K562 (cell line): ENCODE measurements at regions of chr4 and their contacts with region 1.

Region 1: DNA sequence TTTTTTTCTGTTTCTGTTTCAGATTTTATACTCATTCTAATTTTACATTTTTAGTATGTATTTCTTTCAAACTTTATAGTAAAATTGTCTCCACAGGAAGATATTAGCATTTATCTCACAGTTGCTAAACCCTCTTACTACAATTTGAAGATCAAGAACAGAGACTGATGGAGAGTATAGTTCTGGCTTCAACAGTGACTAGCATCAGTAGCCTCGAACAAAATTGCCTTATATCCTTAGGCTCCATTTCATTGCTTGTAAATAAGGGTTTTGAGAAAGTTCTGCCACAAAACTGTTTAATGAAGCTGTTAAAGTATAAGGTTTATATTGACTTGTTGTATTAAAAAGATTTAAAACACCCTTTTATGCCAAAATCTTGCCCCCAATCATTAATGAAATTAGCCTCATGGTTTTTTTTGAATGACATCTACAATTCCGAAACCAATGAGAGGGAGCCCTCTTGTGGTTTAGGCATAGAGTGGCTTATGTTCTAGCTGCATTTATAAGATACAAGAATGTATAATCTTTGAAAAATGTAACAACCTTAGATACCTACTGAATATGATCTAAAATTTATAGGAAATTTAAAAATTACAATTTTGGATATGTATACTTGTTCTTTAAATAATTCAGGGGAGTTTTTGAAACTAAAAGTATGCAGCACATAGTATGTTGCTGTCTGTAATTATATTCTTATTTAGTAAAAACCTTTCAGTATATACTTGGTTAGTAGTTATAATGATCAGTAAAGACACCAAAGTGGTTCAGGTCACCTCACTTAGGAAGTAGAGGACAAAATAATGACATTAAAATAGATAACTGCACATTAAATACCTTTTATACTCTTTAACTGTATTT is 109.8 kb upstream of the HPGD start:
- DNase-seq: peak; percentile 24 to 71 (median 32)
- ATAC-seq: peak; percentile 90
- H3K4me3 ChIP-seq: no peak overlapping the region
- H3K27ac ChIP-seq: no peak overlapping the region
- H3K4me1 ChIP-seq: no peaks in the 10 kb centered on the region
- H3K27me3 ChIP-seq: no peaks in the 10 kb centered on the region
- CTCF ChIP-seq: peak; percentile 48 to 83 (median 58); a peak in 5 of 6 replicates
- EP300 ChIP-seq: no peak
- POLR2A ChIP-seq: no peak
- RAD21 ChIP-seq: peak; percentile 86 to 92

Region 2: DNA sequence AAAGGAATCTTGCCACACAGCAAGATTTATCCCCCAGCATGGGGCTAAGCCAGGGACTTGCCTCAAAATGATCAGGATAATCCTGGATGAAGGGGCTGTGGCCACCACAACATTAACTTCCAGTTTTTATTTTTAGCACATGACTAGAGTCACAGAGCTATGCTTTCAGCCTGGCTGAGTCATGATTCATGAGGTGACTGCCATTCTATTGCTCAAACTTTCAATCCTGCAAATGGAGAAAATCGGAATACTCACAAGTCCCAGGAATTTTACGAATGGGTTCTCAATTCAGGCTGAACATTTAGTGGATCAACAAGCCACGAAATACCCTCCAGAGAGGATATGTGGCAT is 39.2 kb before region 1 on chr4:
- CTCF ChIA-PET with region 1: no interaction called
- POLR2A ChIA-PET with region 1: no interaction called
- in situ Hi-C with region 1: no loop called
- intact Hi-C with region 1: no loop called
- DNase-seq: peak in 2 of 4 experiments; percentile 34 to 53
- ATAC-seq: peak; percentile 68
- H3K4me3 ChIP-seq: no peak overlapping the region
- H3K27ac ChIP-seq: peak overlapping the region; percentile 50; the same call in 1 of the 3 replicates
- H3K4me1 ChIP-seq: peaks cover 0 to 4% of the 10 kb centered on the region in 2 experiments; a peak in 2 of 5 replicates
- H3K27me3 ChIP-seq: no peaks in the 10 kb centered on the region
- CTCF ChIP-seq: no peak
- EP300 ChIP-seq: no peak
- POLR2A ChIP-seq: no peak
- RAD21 ChIP-seq: no peak

Region 3: DNA sequence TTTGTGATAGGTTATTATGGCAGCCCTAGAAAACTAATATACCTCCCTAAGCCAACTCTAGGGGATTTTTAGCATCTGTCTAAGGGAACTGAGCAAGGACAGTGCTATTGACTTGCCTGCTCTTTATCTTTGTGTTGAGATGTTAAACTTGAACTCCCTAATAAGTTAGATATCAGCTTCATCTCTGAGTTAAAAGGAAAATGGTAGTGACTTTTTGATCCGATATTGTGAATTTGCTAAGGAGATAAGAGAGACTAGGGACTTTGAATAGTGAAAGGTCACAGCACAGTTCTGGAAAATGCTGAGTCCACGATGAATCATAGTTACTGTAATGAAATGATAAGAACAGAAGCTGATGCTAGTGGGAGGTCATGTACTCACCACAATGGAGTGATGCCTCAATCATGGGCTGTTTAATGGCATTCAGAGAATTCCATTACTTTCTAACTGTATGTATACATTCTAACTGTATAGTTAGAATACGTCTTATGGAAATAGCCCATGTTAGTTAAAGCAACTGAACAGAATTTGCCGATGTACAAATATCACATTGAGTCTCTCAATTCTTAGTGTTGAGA is 49.7 kb after region 1 on chr4:
- CTCF ChIA-PET with region 1: no interaction called
- POLR2A ChIA-PET with region 1: no interaction called
- in situ Hi-C with region 1: no loop called
- intact Hi-C with region 1: no loop called
- DNase-seq: peak; percentile 81 to 93 (median 82)
- ATAC-seq: peak; percentile 97
- H3K4me3 ChIP-seq: no peak overlapping the region
- H3K27ac ChIP-seq: peak overlapping the region; percentile 94
- H3K4me1 ChIP-seq: peaks cover 0 to 26% of the 10 kb centered on the region in 2 experiments; a peak in 2 of 5 replicates
- H3K27me3 ChIP-seq: no peaks in the 10 kb centered on the region
- CTCF ChIP-seq: no peak
- EP300 ChIP-seq: peak; percentile 99
- POLR2A ChIP-seq: no peak
- RAD21 ChIP-seq: no peak

Region 4: DNA sequence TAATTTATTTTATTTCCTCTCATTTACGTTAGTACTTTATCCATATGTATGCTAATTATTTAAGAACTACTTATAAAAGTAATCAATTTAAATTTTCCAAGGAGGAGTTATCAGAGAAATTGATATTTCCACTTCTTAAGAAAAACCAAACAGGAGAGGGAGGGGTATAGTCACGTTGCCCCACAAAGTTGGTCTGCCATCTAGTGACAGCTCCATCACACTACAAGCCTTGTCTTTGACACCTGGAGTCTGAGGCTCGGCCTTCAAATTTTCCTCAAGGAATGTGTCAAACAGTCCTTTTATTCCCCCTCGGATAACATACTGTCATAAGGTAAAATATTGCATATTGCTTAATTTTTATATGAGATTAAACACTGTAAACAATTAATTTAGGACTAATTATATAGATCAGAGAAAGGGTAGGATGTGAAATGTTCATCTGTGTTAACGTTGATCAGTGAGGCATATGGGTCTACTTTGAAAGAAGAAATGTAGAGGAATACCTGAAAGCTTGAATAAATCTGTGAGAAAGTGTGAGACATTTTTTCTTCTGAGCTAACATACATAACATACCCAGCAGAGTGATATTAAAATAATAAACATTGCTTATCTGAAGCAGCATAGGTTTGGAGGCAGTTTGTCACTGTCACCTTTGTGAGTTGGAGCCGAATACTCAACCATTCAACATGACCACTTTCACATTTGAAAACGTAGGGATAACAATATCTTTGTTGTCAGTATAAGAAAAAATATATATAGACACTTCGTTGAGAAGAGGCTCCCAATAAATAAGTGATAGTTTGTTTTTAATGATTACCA is 82.5 kb after region 1 on chr4:
- CTCF ChIA-PET with region 1: interaction called, 5 read pairs
- POLR2A ChIA-PET with region 1: no interaction called
- in situ Hi-C with region 1: no loop called
- intact Hi-C with region 1: loop called (anchors 1 kb)
- DNase-seq: peak; percentile 70 to 84 (median 72)
- ATAC-seq: peak; percentile 95
- H3K4me3 ChIP-seq: no peak overlapping the region
- H3K27ac ChIP-seq: no peak overlapping the region
- H3K4me1 ChIP-seq: no peaks in the 10 kb centered on the region; a peak in 1 of 5 replicates
- H3K27me3 ChIP-seq: no peaks in the 10 kb centered on the region
- CTCF ChIP-seq: peak; percentile 64 to 84 (median 81)
- EP300 ChIP-seq: no peak
- POLR2A ChIP-seq: no peak
- RAD21 ChIP-seq: peak; percentile 81 to 82